BJ (cell line): ENCODE measurements at regions of chr15 and their contacts with region 1.

Region 1: DNA sequence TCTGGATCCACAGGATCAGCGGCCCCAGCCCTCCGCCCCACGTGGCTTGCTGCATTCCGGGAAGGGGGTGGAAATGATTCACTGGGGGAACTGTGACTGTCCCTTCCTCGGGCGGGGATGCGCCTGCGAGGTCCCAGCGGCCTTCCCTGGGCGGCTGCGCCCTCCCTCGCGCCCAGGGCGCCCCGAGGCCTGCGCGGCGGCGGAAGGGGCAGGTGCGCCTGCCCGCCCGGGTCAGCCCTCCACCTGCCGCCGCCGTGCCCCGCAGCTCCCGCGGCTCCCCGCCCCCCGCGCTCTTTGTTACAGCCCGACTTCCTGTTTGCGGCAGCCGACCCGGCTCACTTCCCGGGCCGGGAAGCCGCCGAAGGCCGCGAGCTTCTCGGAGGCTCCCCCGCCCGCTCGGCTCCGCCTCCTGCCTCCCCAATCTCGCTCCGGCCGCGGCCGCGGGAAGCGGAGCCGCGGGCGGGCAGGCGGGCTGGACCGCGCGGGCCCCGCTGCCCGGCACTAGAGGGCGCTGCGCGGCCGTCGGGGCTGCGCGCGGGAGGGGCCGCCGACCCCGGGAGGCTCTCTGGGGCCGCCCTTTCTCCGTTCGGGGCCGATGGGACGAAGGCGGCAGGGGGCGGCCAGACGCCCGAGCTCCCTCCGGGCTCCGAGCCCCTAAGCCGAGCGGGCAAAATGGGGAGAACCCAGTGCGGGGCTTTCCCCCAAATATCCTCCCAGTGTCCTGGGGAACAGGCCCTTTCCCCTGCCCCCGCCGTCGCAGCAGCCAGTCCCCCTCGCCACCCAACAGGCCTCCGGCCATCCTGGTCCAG is 11.5 kb upstream of the CHAC1 start:
- DNase-seq: no peak
- H3K4me3 ChIP-seq: peak overlapping the region; percentile 50
- H3K27me3 ChIP-seq: no peaks in the 10 kb centered on the region
- CTCF ChIP-seq: peak; percentile 27

Region 2: DNA sequence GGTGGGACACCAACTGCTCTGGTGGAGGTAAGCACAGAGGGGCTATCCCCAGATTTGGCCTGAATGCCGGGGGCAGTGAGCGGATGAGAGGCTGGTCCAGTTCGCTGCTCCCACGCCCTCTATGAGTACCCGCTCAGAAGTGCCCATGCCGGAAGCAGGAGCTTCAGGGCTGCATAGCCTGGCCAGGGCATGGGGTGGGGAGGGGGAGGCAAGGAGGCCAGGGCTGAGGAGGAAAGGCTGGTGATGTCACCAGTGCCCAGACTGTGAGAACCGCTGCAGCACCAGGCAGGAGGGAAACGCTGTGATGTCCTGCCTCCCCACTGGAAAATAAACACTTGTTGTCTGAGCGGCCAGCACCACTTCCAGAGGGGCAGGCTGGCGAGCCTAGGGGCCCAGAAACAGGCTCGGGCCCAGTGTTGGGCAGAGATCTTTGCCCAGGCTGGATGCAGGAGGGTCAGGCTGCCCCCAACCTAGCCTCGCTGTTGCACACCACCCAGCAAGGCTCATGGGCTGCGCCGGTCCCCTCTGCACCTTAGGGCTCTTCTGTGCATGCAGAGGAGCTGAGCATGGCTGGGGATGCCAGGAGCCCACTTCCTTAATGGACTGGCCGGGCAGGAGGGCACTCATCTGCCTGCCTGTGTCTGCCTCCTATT is 23.5 kb before region 1 on chr15:
- CTCF ChIA-PET with region 1: interaction called, 28 read pairs
- POLR2A ChIA-PET with region 1: no interaction called
- DNase-seq: no peak
- H3K4me3 ChIP-seq: no peak overlapping the region
- H3K27me3 ChIP-seq: peaks cover 3% of the 10 kb centered on the region; the same call in 1 of the 2 replicates
- CTCF ChIP-seq: no peak

Region 3: GRCh38 chr15:40952901-40953712 is 11.4 kb after region 1 on chr15 and contains the start of gene CHAC1:
- CTCF ChIA-PET with region 1: interaction called, 77 read pairs
- POLR2A ChIA-PET with region 1: interaction called, 8 read pairs
- DNase-seq: peak; percentile 87
- H3K4me3 ChIP-seq: peak within 1 kb of the TSS; percentile 92
- H3K27me3 ChIP-seq: no peaks in the 10 kb centered on the region
- CTCF ChIP-seq: no peak
- polyA plus RNA-seq, gene CHAC1: 107 and 155 TPM in 2 replicates

Region 4: DNA sequence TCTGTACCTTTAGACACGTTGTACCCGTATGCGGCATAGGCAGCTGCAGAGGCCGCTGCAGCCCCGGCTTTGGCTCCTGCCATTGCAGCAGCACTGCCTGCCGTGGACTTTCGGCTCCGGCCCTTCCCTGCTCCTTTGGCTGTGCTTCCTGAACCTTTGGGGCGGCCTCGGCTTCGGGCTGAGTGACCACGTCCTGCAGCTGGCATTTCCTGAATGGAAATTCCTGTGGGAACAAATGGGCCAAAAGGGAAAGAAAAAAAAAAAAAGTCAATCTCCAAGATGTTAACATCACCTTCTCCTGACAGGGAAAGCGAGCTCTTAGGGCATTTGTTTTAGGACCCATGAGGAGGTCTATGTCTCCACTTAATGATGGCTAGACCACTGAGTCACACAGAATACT is 41.1 kb after region 1 on chr15:
- CTCF ChIA-PET with region 1: interaction called, 19 read pairs
- POLR2A ChIA-PET with region 1: no interaction called
- DNase-seq: peak; percentile 81
- H3K4me3 ChIP-seq: no peak overlapping the region
- H3K27me3 ChIP-seq: no peaks in the 10 kb centered on the region
- CTCF ChIP-seq: no peak